ENCODE measurements at regions of chr14 and their contacts with region 1.

Region 1: GRCh38 chr14:20682435-20683124 is 1.8 kb upstream of the RNASE4 start:
- DNase-seq: peak; percentile 68
- H3K4me3 ChIP-seq: peak overlapping the region; percentile 74
- H3K27ac ChIP-seq: peak overlapping the region; percentile 49
- H3K4me1 ChIP-seq: peaks cover 42% of the 10 kb centered on the region
- CTCF ChIP-seq: no peak

Region 2: DNA sequence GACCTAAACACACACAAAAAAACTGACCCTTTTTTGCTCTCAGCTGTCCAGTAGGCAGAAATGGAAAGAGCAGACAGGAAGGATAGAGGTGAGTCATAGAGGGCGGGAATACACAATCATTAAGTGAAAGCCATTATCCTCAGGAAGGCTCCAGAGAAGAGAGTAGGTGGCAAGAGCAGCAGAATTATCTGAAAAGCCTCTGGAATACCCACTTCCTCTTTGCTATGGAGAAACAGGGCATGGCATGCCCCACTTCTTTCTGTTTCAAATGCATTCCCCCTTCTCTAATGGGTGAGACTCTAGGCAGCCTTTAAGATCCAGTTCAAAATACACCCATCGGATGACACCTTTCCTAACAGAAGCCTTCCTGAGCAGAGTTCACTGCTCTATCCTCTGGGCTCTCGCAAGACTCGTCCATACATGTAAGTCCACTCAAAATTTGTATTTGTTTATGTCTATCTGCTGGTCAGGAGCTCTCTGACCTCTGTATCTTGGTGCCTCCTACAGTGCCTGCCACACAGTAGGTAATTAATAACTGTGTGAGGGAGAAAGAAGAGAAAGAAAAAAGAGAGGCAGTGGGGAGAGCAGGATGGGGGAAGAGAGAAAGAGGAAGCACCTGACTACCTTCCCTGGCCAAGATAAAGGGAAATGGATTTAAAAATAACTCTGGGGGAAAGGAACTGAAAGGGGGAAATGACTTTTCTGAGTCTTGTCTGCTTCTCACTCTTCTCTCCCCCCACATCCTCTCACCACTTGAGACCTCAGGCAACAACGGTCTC is 255.2 kb before region 1 on chr14:
- CTCF ChIA-PET with region 1: no interaction called
- POLR2A ChIA-PET with region 1: no interaction called
- intact Hi-C with region 1: no loop called
- DNase-seq: peak; percentile 82
- H3K4me3 ChIP-seq: peak overlapping the region; percentile 54
- H3K27ac ChIP-seq: peak overlapping the region; percentile 94
- H3K4me1 ChIP-seq: peaks cover 55% of the 10 kb centered on the region
- CTCF ChIP-seq: no peak

Region 3: DNA sequence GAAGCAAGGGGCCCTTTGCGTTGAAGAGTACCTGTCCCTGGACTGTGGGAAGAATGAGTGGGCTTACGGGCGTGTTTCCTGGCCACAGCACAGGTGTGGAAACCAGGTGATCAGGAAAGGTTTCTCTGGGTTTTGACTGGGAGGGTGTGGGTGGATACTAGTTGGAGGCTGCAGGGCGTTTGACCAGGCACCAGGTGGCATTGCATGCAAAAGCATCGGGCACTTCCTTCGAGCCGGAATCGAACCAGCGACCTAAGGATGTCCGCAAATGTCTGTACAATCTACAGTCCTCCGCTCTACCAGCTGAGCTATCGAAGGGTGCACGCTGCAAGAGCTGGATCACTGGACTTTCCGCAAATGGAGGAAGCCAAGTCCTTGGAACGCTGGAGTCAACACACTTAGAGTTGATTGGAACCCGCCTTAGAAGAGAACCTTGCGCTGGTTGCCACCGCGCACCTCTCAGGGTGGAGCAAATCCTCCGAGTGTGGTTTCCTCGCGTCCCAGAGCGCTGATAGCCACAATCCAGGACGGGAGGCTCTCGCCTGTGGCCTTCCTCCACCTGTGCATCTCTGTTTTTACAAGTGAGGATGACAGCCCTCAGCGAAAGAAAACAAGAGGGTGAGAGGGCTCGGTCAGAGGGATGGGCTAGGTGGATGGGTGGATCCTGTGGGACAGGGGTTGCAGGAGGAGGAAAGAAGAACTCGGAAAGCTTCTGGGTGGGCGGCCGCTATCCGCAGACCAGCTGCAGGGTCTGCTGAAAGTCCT is 19.4 kb before region 1 on chr14:
- CTCF ChIA-PET with region 1: interaction called, 9 read pairs
- POLR2A ChIA-PET with region 1: interaction called, 9 read pairs
- intact Hi-C with region 1: loop called (anchors 1 kb)
- DNase-seq: peak; percentile 59
- H3K4me3 ChIP-seq: no peak overlapping the region
- H3K27ac ChIP-seq: no peak overlapping the region
- H3K4me1 ChIP-seq: peaks cover 10% of the 10 kb centered on the region
- CTCF ChIP-seq: peak; percentile 75

Region 4: GRCh38 chr14:20799892-20800544 is 117.4 kb after region 1 on chr14:
- CTCF ChIA-PET with region 1: no interaction called
- POLR2A ChIA-PET with region 1: no interaction called
- intact Hi-C with region 1: no loop called
- DNase-seq: no peak
- H3K4me3 ChIP-seq: no peak overlapping the region
- H3K27ac ChIP-seq: no peak overlapping the region
- H3K4me1 ChIP-seq: no peaks in the 10 kb centered on the region
- CTCF ChIP-seq: no peak

Region 5: GRCh38 chr14:21103710-21104447 is 421.3 kb after region 1 on chr14:
- CTCF ChIA-PET with region 1: no interaction called
- POLR2A ChIA-PET with region 1: no interaction called
- intact Hi-C with region 1: loop called (anchors 10 kb)
- DNase-seq: peak; percentile 97
- H3K4me3 ChIP-seq: peak overlapping the region; percentile 85
- H3K27ac ChIP-seq: peak overlapping the region; percentile 59
- H3K4me1 ChIP-seq: peaks cover 45% of the 10 kb centered on the region
- CTCF ChIP-seq: 0 out of 2 replicates have a peak, but pooled peaks have one; percentile 76